ENCODE measurements at regions of chr6 and their contacts with region 1.

Region 1: DNA sequence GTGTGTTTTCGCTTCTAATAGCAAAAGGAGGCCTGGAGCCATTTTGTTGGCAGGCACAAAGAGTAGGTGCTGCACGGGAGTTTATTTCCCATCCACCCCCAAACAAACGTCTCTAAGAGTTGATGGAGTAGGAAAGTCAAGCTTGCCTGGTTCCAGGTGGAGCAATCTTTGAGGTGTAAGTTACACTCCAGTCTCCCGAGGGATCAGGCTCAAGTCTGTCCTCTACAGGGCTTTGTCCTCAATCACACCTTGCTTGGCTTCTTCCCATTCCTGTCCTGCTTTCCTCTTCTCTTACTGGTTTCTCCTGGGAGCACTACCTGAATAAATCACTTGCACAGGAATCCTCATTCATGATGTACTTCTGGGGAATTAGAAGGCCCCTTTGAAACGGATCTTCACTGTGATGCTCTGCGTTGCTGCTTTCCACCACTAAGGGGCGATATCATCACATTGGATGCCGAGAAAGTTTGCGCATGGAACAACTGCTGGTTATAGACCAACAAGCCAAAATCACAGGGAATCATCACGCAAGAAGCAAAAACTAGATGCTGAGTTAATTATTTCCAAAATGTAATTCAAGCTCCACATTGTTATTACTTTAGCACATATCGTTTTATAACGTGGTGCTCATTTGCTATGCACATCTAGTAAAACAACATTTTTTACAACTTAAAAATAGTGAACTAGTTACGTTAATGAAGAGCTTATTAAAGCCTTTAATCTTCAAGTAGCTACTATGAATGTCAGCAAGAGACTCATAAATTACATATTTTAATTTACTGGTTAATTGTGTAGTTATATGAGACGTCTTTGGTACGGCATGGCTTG is 156.8 kb downstream of the DNAH8 start:
- DNase-seq: peak; percentile 77
- ATAC-seq: peak; percentile 60
- H3K4me3 Mint-ChIP-seq: no peak overlapping the region
- H3K27ac Mint-ChIP-seq: no peak overlapping the region
- H3K4me1 Mint-ChIP-seq: peaks cover 33% of the 10 kb centered on the region
- H3K27me3 Mint-ChIP-seq: no peaks in the 10 kb centered on the region

Region 2: DNA sequence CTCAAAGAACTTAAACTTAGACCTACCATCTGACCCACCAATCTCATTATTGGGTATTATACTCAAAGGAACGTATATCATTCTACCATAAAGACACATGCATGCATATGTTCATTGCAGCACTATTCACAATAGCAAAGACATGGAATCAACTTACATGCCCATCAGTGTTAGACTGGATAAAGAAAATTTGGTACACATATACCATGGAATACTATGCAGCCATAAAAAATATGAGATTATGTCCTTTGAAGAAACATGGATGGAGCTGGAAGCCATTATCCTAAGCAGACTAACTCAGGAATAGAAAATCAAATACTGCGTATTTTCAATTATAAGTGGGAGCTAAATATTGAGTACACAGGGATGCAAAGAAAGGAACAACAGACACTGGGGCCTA is 10.2 kb after region 1 on chr6:
- CTCF ChIA-PET with region 1: interaction called, 13 read pairs
- POLR2A ChIA-PET with region 1: no interaction called
- intact Hi-C with region 1: no loop called
- DNase-seq: no peak
- ATAC-seq: no peak
- H3K4me3 Mint-ChIP-seq: no peak overlapping the region
- H3K27ac Mint-ChIP-seq: no peak overlapping the region
- H3K4me1 Mint-ChIP-seq: peaks cover 6% of the 10 kb centered on the region
- H3K27me3 Mint-ChIP-seq: no peaks in the 10 kb centered on the region

Region 3: DNA sequence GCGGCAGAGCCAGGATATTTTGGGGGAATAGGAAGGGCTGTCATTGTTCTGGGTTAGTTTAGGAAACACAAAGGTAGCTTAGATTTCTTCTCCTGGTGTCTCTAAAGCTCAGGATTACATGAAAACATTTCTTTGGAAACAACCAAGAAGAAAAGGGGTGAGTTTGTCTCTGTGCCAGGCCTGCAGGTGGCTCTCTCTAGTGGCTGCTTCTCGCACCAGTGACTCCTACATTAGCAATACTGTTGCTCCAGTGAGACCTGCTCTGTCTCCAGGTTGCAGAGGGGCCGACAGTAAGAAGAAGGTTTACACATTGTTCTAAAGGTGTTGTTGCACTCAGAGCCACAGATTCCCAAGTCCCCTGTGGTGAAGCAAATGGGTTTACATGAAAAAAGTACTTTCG is 72.0 kb after region 1 on chr6:
- CTCF ChIA-PET with region 1: interaction called, 11 read pairs
- POLR2A ChIA-PET with region 1: no interaction called
- intact Hi-C with region 1: no loop called
- DNase-seq: no peak
- ATAC-seq: no peak
- H3K4me3 Mint-ChIP-seq: no peak overlapping the region
- H3K27ac Mint-ChIP-seq: no peak overlapping the region
- H3K4me1 Mint-ChIP-seq: no peaks in the 10 kb centered on the region
- H3K27me3 Mint-ChIP-seq: no peaks in the 10 kb centered on the region

Region 4: DNA sequence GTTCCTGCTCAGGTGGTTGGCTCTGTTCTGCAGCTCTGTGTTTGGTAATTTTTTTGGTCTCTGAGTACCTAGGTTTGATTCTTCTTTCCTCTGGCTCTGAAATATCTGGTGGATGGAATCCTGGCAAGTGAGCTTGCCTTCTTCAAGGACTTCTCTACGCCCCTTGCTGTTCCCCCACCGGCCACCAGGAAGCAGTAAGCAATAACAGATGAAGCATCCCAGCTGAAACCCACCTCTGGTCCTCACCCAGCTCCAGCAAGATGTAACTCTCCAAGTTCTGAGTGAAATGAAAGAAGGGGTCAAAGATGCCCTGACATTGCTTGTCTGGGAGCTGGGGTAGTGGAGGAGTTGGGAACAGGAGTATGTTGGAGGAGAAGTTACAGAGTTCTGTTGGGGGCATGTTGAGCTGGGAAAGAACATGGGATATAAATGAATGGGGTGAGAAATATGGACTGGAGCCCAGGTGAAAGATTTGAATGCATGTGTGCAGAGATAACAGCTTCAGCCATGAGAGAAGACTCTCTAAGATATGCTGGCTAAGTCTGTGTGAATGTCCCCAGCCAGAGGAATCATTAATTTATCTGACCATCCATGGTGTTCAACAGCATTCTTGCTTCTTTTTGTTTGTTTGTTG is 125.3 kb after region 1 on chr6:
- CTCF ChIA-PET with region 1: interaction called, 10 read pairs
- POLR2A ChIA-PET with region 1: no interaction called
- intact Hi-C with region 1: no loop called
- DNase-seq: peak; percentile 68
- ATAC-seq: peak; percentile 55
- H3K4me3 Mint-ChIP-seq: no peak overlapping the region
- H3K27ac Mint-ChIP-seq: no peak overlapping the region
- H3K4me1 Mint-ChIP-seq: no peaks in the 10 kb centered on the region
- H3K27me3 Mint-ChIP-seq: peaks cover 29% of the 10 kb centered on the region

Region 5: GRCh38 chr6:39092124-39092523 is 220.2 kb after region 1 on chr6:
- CTCF ChIA-PET with region 1: no interaction called
- POLR2A ChIA-PET with region 1: no interaction called
- intact Hi-C with region 1: no loop called
- DNase-seq: no peak
- ATAC-seq: no peak
- H3K4me3 Mint-ChIP-seq: no peak overlapping the region
- H3K27ac Mint-ChIP-seq: no peak overlapping the region
- H3K4me1 Mint-ChIP-seq: no peaks in the 10 kb centered on the region
- H3K27me3 Mint-ChIP-seq: peaks cover 31% of the 10 kb centered on the region

Region 6: GRCh38 chr6:39114704-39115599 is 243.0 kb after region 1 on chr6 and contains the start of gene SAYSD1:
- CTCF ChIA-PET with region 1: interaction called, 4 read pairs
- POLR2A ChIA-PET with region 1: no interaction called
- intact Hi-C with region 1: loop called in 1 of 2 experiments (anchors 10 kb)
- DNase-seq: peak; percentile 96
- ATAC-seq: peak; percentile 77
- H3K4me3 Mint-ChIP-seq: peak within 1 kb of the TSS; percentile 85
- H3K27ac Mint-ChIP-seq: peak within 1 kb of the TSS; percentile 98
- H3K4me1 Mint-ChIP-seq: peaks cover 63% of the 10 kb centered on the region
- H3K27me3 Mint-ChIP-seq: no peaks in the 10 kb centered on the region
- total RNA-seq, gene SAYSD1: 14.1 to 16.7 TPM

Region 7: DNA sequence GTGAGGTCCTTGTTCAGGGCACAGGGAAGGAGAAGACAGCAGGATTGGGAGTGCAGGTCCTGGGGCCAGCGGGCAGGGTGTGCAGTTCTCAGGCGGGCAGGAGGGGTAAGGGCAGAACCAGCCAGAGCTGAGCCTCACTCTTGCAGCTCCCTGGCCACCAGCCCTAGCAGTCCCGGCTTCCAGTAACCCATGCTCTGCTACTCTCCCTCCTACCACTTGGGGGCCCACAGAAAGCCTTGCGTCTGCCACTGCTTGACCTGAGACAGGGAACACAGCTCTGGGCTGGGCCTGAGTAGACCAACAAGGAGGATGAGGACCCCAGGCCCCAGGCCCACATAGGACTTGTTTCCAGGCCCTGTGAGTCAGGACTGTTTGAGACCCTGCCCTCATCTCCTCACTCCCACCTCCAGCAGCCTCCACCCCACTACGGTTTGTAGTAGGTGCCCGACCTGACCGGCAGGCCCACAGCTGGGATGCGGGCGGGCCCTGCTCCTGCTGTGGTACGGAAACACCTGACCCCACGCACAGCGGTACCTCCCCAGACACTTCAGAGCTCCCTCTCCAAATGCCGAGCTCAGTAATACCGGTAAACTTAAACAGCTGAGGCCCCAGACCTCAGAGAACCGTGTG is 318.1 kb after region 1 on chr6:
- CTCF ChIA-PET with region 1: no interaction called
- POLR2A ChIA-PET with region 1: no interaction called
- intact Hi-C with region 1: no loop called
- DNase-seq: peak; percentile 42
- ATAC-seq: peak; percentile 50
- H3K4me3 Mint-ChIP-seq: no peak overlapping the region
- H3K27ac Mint-ChIP-seq: no peak overlapping the region
- H3K4me1 Mint-ChIP-seq: peaks cover 15% of the 10 kb centered on the region
- H3K27me3 Mint-ChIP-seq: no peaks in the 10 kb centered on the region

Region 8: DNA sequence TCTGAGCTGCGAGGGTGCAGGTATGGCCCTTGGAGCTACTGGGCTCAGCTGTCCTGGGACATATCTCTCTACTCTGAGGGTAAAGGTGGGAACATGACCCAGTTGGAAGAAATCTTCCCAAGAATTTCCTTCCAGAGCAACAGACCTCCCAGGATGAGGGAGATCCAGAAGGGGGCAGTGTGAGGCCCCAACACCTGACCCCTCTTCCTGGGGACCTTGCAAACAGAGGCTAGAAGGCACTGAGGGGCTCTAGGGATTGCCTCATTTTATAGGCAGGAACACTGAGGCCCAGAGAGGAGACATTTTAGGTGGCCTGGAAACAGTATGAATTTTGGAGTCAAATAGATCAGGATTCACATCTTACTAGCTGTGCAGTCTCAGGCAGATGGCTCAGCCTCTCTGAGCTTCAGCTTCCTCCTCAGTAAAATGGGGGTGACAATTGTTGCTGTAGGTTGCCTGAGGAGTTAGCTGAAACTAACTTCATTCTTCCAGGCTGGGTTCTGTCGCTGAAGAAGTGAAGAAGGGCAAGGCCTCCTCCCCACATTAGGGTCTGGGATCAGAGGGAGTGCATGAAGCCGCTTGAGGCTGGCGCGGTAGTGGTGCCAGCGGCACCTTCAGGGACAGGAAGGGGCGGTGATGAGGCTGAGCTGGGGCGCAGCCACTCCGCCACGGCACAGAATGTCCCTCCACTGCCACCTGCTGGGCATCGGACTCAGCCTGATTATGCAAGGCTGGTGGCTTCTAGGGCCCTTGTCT is 430.9 kb after region 1 on chr6:
- CTCF ChIA-PET with region 1: interaction called, 12 read pairs
- POLR2A ChIA-PET with region 1: no interaction called
- intact Hi-C with region 1: loop called (anchors 1 to 2 kb)
- DNase-seq: peak; percentile 96
- ATAC-seq: peak; percentile 98
- H3K4me3 Mint-ChIP-seq: peak overlapping the region; percentile 44
- H3K27ac Mint-ChIP-seq: no peak overlapping the region
- H3K4me1 Mint-ChIP-seq: peaks cover 4% of the 10 kb centered on the region
- H3K27me3 Mint-ChIP-seq: no peaks in the 10 kb centered on the region

Measured in activated CD4-positive, alpha-beta T cell treated with anti-CD3 and anti-CD28 coated beads for 36 hours (primary cell).